H1 (cell line): ENCODE measurements at regions of chr9 and their contacts with region 1.

Region 1: DNA sequence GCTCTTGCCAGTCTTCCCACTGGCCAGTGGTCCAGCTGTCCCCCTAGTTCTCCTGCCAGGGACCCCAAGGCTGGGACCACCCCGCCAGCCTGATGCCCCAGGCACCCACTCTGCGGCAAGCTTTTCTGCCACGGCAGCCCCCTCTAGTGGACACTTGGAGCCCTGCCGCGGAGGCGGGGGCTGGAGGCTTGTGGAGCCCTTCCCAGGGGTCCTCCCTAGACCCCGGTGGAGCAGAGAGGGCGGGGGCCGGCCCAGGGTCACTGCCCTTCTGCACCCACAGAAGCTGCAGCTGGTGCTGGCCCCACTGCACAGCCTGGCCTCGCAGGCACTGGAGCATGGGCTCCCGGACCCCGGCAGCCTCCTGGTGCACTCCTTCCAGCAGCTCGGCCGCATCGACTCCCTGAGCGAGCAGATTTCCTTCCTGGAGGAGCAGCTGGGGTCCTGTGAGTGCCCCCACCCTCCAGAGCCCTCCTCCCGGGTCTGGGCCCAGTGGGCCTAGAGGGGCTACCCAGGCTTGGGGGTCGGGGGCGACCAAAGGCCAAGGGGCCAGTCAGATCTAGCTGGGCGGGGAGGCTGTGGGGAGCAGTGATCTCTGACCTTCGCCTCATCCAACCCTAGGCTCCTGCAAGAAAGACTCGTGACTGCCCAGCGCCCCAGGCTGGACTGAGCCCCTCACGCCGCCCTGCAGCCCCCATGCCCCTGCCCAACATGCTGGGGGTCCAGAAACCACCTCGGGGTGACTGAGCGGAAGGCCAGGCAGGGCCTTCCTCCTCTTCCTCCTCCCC is 9.1 kb downstream of the EGFL7 start:
- DNase-seq: peak in 1 of 2 experiments; percentile 92
- H3K4me3 ChIP-seq: no peak overlapping the region
- H3K27ac ChIP-seq: no peak overlapping the region
- H3K4me1 ChIP-seq: peaks cover 0 to 4% (median 0%) of the 10 kb centered on the region in 4 experiments; a peak in 3 of 7 replicates
- H3K27me3 ChIP-seq: no peaks in the 10 kb centered on the region
- CTCF ChIP-seq: peak in 2 of 3 experiments; percentile 76 to 84; a peak in 3 of 4 replicates
- EP300 ChIP-seq: no peak
- POLR2A ChIP-seq: no peak
- RAD21 ChIP-seq: peak; percentile 38 to 60; a peak in 3 of 4 replicates

Region 2: GRCh38 chr9:136488247-136489214 is 183.3 kb before region 1 on chr9:
- CTCF ChIA-PET with region 1: interaction called, 15 read pairs
- POLR2A ChIA-PET with region 1: no interaction called
- DNase-seq: peak; percentile 23 to 94
- H3K4me3 ChIP-seq: no peak overlapping the region
- H3K27ac ChIP-seq: no peak overlapping the region
- H3K4me1 ChIP-seq: peaks cover 0 to 7% (median 2%) of the 10 kb centered on the region in 4 experiments; a peak in 5 of 7 replicates
- H3K27me3 ChIP-seq: no peaks in the 10 kb centered on the region
- CTCF ChIP-seq: peak in 2 of 3 experiments; percentile 94 to 95; a peak in 3 of 4 replicates
- EP300 ChIP-seq: no peak
- POLR2A ChIP-seq: no peak
- RAD21 ChIP-seq: peak; percentile 94 to 95

Region 3: GRCh38 chr9:136655536-136656182 is 16.2 kb before region 1 on chr9:
- CTCF ChIA-PET with region 1: interaction called, 21 read pairs
- POLR2A ChIA-PET with region 1: interaction called, 3 read pairs
- DNase-seq: no peak
- H3K4me3 ChIP-seq: no peak overlapping the region
- H3K27ac ChIP-seq: no peak overlapping the region
- H3K4me1 ChIP-seq: no peaks in the 10 kb centered on the region
- H3K27me3 ChIP-seq: no peaks in the 10 kb centered on the region; a peak in 1 of 7 replicates
- CTCF ChIP-seq: no peak
- EP300 ChIP-seq: no peak
- POLR2A ChIP-seq: no peak
- RAD21 ChIP-seq: no peak

Region 4: GRCh38 chr9:136694236-136694942 is 22.6 kb after region 1 on chr9:
- CTCF ChIA-PET with region 1: interaction called, 125 read pairs
- POLR2A ChIA-PET with region 1: interaction called, 3 read pairs
- DNase-seq: peak in 1 of 2 experiments; percentile 90
- H3K4me3 ChIP-seq: 0 out of 8 replicates have a peak overlapping the region, but pooled peaks of 1 of the 4 experiments have one; percentile 43
- H3K27ac ChIP-seq: no peak overlapping the region
- H3K4me1 ChIP-seq: peaks cover 0 to 16% (median 12%) of the 10 kb centered on the region in 4 experiments; a peak in 4 of 7 replicates
- H3K27me3 ChIP-seq: no peaks in the 10 kb centered on the region
- CTCF ChIP-seq: peak in 2 of 3 experiments; percentile 79 to 89; a peak in 3 of 4 replicates
- EP300 ChIP-seq: no peak
- POLR2A ChIP-seq: no peak
- RAD21 ChIP-seq: peak; percentile 81 to 89